ENCODE measurements at regions of chr7 and their contacts with region 1.

Region 1: GRCh38 chr7:116786791-116787443 is 75.5 kb upstream of the CAPZA2 start:
- DNase-seq: peak; percentile 48
- ATAC-seq: peak; percentile 97
- H3K4me3 Mint-ChIP-seq: no peak overlapping the region
- H3K27ac Mint-ChIP-seq: no peak overlapping the region
- H3K4me1 Mint-ChIP-seq: no peaks in the 10 kb centered on the region
- H3K27me3 Mint-ChIP-seq: no peaks in the 10 kb centered on the region

Region 2: DNA sequence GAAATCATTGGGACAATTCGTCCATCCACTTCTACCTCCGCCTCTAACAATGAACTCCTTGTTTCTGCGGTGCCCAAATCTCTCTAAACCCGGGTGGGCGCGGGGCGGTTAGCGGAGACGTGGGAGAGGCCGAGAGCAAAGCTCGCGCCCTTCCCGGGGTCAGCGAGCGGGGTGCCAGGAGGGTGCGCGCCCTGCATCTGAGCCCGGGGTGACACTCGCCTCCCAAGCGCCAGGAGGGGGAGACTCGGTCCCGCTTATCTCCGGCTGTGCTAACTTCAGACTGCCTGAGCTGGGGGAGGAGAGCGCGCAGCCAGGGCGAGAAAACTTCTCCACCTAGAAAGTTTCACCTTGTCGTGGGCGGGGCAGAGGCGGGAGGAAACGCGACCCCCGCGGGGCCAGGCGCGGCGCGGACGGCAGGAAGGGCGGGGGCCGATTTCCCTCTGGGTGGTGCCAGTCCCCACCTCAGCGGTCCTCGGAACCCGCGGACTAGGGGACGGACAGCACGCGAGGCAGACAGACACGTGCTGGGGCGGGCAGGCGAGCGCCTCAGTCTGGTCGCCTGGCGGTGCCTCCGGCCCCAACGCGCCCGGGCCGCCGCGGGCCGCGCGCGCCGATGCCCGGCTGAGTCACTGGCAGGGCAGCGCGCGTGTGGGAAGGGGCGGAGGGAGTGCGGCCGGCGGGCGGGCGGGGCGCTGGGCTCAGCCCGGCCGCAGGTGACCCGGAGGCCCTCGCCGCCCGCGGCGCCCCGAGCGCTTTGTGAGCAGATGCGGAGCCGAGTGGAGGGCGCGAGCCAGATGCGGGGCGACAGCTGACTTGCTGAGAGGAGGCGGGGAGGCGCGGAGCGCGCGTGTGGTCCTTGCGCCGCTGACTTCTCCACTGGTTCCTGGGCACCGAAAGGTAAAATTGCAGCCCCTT is 115.0 kb before region 1 on chr7 and contains the start of gene MET:
- CTCF ChIA-PET with region 1: interaction called, 3 read pairs
- POLR2A ChIA-PET with region 1: no interaction called
- intact Hi-C with region 1: loop called (anchors 1 to 2 kb)
- DNase-seq: peak; percentile 82
- ATAC-seq: peak; percentile 97
- H3K4me3 Mint-ChIP-seq: peak within 1 kb of the TSS; percentile 46
- H3K27ac Mint-ChIP-seq: no peak within 1 kb of the TSS
- H3K4me1 Mint-ChIP-seq: peaks cover 7% of the 10 kb centered on the region
- H3K27me3 Mint-ChIP-seq: peaks cover 47% of the 10 kb centered on the region
- total RNA-seq, gene MET: 0.63 to 0.91 TPM

Region 3: DNA sequence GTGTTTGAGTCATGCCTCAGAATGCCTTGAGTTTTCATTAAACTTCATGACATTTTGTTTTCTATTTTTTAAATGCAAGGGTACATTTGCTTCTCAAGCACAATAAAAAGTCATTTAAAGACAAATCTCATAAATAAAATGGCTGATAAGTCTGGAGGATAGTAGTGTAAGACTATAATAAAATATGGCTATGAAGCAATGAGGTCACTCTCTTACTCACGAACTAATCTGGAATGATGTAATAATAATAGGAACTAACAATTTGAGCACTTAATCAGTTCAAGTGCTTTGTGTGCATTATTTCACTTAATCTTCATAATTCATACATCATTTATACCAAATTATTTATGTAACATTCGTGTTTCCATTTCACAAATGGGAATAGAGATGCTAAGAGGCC is 1235.6 kb after region 1 on chr7:
- CTCF ChIA-PET with region 1: no interaction called
- POLR2A ChIA-PET with region 1: no interaction called
- intact Hi-C with region 1: no loop called
- DNase-seq: no peak
- ATAC-seq: no peak
- H3K4me3 Mint-ChIP-seq: no peak overlapping the region
- H3K27ac Mint-ChIP-seq: no peak overlapping the region
- H3K4me1 Mint-ChIP-seq: no peaks in the 10 kb centered on the region
- H3K27me3 Mint-ChIP-seq: peaks cover 1% of the 10 kb centered on the region

Measured in activated CD4-positive, alpha-beta T cell treated with anti-CD3 and anti-CD28 coated beads for 36 hours (primary cell).